ENCODE measurements at regions of chr1 and their contacts with region 1.

Region 1: GRCh38 chr1:214335567-214335966 is 54.6 kb downstream of the SMYD2 start:
- DNase-seq: no peak
- ATAC-seq: no peak
- H3K4me3 ChIP-seq: no peak overlapping the region
- H3K27ac ChIP-seq: peak overlapping the region in 1 of 4 donors; percentile 10
- H3K4me1 ChIP-seq: peaks cover 21 to 32% of the 10 kb centered on the region in 2 donors
- H3K27me3 ChIP-seq: no peaks in the 10 kb centered on the region
- CTCF ChIP-seq: no peak
- POLR2A ChIP-seq: no peak

Region 2: DNA sequence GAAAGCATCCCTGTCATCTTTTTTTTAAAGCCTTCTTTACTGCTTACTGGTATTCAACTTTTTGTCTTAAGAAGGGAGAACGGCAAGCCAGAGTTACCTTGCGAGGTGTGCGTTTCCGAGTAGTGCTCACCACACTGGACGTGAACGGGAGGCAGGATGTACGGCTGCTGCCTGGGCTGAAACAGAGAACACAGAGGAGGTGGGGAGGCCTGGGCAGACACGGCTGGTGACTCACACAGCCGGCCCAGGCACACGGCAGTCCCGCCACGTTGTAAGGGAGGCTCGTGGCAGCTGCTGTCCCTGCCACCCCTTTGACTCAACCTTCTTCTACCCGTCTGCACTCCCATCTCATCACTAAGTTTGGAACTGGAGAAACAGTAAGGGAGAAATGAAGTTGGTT is 51.2 kb after region 1 on chr1:
- in situ Hi-C with region 1: no loop called
- intact Hi-C with region 1: loop called (anchors 2 kb)
- DNase-seq: peak; percentile 45 to 65
- ATAC-seq: peak; percentile 84 to 89
- H3K4me3 ChIP-seq: no peak overlapping the region
- H3K27ac ChIP-seq: peak overlapping the region; percentile 52 to 68 (median 58)
- H3K4me1 ChIP-seq: peaks cover 0 to 3% of the 10 kb centered on the region in 2 donors
- H3K27me3 ChIP-seq: no peaks in the 10 kb centered on the region
- CTCF ChIP-seq: no peak
- POLR2A ChIP-seq: no peak

Region 3: DNA sequence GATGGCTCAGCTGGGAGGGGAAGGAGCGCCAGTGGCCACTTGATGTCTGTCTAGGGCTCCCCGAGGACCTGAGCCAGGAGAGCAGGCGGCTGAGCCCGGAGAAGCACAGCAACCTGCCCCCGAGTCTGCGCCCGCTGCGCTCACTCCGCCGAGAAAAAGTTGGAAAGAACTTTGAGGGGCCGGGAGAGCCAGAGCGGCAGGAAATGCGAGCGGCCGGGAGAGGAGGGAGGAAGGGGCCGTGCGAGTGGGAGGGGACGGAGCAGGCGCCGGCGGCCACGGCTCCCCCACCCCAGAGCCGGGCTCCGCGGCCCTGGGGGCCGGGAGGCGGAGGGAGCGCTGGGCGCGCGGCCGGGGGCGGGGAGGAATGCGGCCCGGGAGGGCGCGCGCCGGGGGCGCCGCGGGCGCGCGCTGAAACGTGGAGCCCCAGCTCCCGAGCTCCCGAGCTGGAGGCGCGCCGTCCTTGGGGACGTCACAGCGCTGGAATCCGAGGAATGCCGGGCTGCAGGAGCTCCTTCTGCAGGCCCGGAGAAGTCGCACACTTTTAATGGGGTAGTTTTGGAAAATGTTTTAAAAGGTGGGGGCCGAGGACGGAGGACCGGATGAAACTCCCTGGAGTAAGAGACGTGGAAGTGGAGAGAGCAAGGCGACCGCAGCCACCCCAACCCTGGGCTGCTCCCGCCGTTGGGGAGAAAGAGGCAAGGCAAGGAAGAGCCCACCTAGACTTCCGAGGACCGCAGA is 216.0 kb after region 1 on chr1 and contains the start of gene PTPN14:
- in situ Hi-C with region 1: no loop called
- intact Hi-C with region 1: loop called (anchors 1 kb)
- DNase-seq: peak; percentile 64 to 80
- ATAC-seq: peak; percentile 73 to 75
- H3K4me3 ChIP-seq: peak within 1 kb of the TSS; percentile 68 to 96 (median 87)
- H3K27ac ChIP-seq: peak within 1 kb of the TSS; percentile 93 to 99 (median 95)
- H3K4me1 ChIP-seq: peaks cover 37 to 38% of the 10 kb centered on the region in 2 donors
- H3K27me3 ChIP-seq: no peaks in the 10 kb centered on the region
- CTCF ChIP-seq: peak in 3 of 5 experiments; percentile 13 to 39 (median 21)
- POLR2A ChIP-seq: peak; percentile 80 to 82
- total RNA-seq, gene PTPN14: 42.8 to 63.8 (median 50.4) TPM